CD8-positive, alpha-beta memory T cell (primary cell): ENCODE measurements at regions of chr1 and their contacts with region 1.

Region 1: DNA sequence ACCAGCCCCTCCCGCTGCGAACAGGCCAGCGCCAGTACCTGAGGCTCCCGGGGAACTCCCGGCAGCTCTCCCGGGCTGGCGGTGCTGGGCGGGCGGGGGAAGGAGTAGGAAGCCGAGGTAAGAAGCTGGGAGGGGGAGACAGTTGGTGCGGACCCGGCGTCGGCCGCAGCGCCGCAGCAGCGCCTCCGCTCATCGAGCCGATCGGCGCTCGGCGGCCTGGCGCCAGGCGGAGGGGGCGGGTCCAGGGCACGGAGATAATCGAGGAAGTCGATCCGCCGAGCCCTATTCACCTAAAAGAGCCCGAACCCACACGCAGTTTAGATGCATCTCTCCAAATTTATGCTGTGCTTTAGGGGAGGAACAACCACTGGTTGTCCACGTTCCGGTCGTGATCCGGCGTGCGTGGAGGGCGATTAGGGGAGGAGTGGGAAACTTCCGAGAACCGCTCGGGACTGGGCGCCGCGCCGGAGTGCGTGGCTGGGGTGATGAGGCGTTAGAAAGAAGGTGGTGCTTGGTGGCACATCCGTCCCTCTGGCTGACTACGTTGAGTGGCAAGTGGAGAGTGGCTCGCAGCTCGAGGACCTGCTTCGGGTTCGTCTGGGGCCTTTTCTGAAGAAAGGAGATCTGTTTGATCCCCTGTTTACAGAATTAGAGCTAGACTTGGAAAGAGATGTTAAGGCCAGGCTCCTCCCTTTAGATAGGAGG is at the start of gene VAMP4:
- DNase-seq: peak; percentile 76 to 89 (median 85)
- H3K4me3 ChIP-seq: peak within 1 kb of the TSS; percentile 96
- H3K4me3 Mint-ChIP-seq: peak within 1 kb of the TSS; percentile 93 to 100 (median 99)
- H3K27ac ChIP-seq: peak within 1 kb of the TSS; percentile 98
- H3K27ac Mint-ChIP-seq: peak within 1 kb of the TSS; percentile 95 to 100 (median 100)
- H3K4me1 ChIP-seq: peaks cover 42% of the 10 kb centered on the region
- H3K4me1 Mint-ChIP-seq: peaks cover 52 to 60% (median 58%) of the 10 kb centered on the region in 3 donors
- H3K27me3 ChIP-seq: no peaks in the 10 kb centered on the region
- H3K27me3 Mint-ChIP-seq: peaks cover 0 to 2% of the 10 kb centered on the region in 2 donors
- total RNA-seq, gene VAMP4: 7.3 to 7.7 TPM

Region 2: GRCh38 chr1:171485375-171486047 is 256.5 kb before region 1 on chr1 and contains the start of gene PRRC2C:
- CTCF ChIA-PET with region 1: interaction called, 11 read pairs
- POLR2A ChIA-PET with region 1: interaction called, 4 read pairs
- DNase-seq: peak; percentile 90 to 97 (median 93)
- H3K4me3 ChIP-seq: peak within 1 kb of the TSS; percentile 98
- H3K4me3 Mint-ChIP-seq: peak within 1 kb of the TSS; percentile 88 to 99 (median 93)
- H3K27ac ChIP-seq: peak within 1 kb of the TSS; percentile 100
- H3K27ac Mint-ChIP-seq: peak within 1 kb of the TSS; percentile 95 to 100 (median 98)
- H3K4me1 ChIP-seq: peaks cover 51% of the 10 kb centered on the region
- H3K4me1 Mint-ChIP-seq: peaks cover 48 to 53% (median 50%) of the 10 kb centered on the region in 3 donors
- H3K27me3 ChIP-seq: no peaks in the 10 kb centered on the region
- H3K27me3 Mint-ChIP-seq: peaks cover 0 to 6% of the 10 kb centered on the region in 2 donors
- total RNA-seq, gene PRRC2C: 262 to 275 TPM

Region 3: GRCh38 chr1:171717062-171717718 is 24.8 kb before region 1 on chr1:
- CTCF ChIA-PET with region 1: no interaction called
- POLR2A ChIA-PET with region 1: no interaction called
- DNase-seq: no peak
- H3K4me3 ChIP-seq: no peak overlapping the region
- H3K4me3 Mint-ChIP-seq: no peak overlapping the region
- H3K27ac ChIP-seq: no peak overlapping the region
- H3K27ac Mint-ChIP-seq: no peak overlapping the region
- H3K4me1 ChIP-seq: no peaks in the 10 kb centered on the region
- H3K4me1 Mint-ChIP-seq: peaks cover 18 to 42% (median 32%) of the 10 kb centered on the region in 3 donors
- H3K27me3 ChIP-seq: no peaks in the 10 kb centered on the region
- H3K27me3 Mint-ChIP-seq: no peaks in the 10 kb centered on the region

Region 4: GRCh38 chr1:171781176-171781875 is 39.3 kb after region 1 on chr1 and contains the start of gene METTL13:
- CTCF ChIA-PET with region 1: interaction called, 7 read pairs
- POLR2A ChIA-PET with region 1: interaction called, 40 read pairs
- DNase-seq: peak; percentile 96 to 99 (median 99)
- H3K4me3 ChIP-seq: peak within 1 kb of the TSS; percentile 79
- H3K4me3 Mint-ChIP-seq: peak within 1 kb of the TSS; percentile 89 to 99 (median 95)
- H3K27ac ChIP-seq: peak within 1 kb of the TSS; percentile 72
- H3K27ac Mint-ChIP-seq: peak within 1 kb of the TSS; percentile 72 to 99 (median 96)
- H3K4me1 ChIP-seq: peaks cover 52% of the 10 kb centered on the region
- H3K4me1 Mint-ChIP-seq: peaks cover 39 to 62% (median 59%) of the 10 kb centered on the region in 3 donors
- H3K27me3 ChIP-seq: no peaks in the 10 kb centered on the region
- H3K27me3 Mint-ChIP-seq: peaks cover 0 to 6% of the 10 kb centered on the region in 2 donors
- total RNA-seq, gene METTL13: 63.7 to 65.8 TPM